ENCODE measurements at regions of chr22 and their contacts with region 1.

Region 1: GRCh38 chr22:35838855-35839576 is 121.3 kb downstream of the APOL5 start:
- DNase-seq: peak; percentile 64
- H3K4me3 ChIP-seq: peak overlapping the region; percentile 21
- H3K27ac ChIP-seq: peak overlapping the region; percentile 52
- H3K4me1 ChIP-seq: no peaks in the 10 kb centered on the region
- H3K27me3 ChIP-seq: no peaks in the 10 kb centered on the region
- CTCF ChIP-seq: no peak

Region 2: GRCh38 chr22:35914665-35915476 is 75.9 kb after region 1 on chr22:
- intact Hi-C with region 1: loop called (anchors 5 kb)
- DNase-seq: peak; percentile 83
- H3K4me3 ChIP-seq: peak overlapping the region; percentile 22
- H3K27ac ChIP-seq: peak overlapping the region; percentile 66
- H3K4me1 ChIP-seq: peaks cover 3% of the 10 kb centered on the region
- H3K27me3 ChIP-seq: no peaks in the 10 kb centered on the region
- CTCF ChIP-seq: no peak

Region 3: DNA sequence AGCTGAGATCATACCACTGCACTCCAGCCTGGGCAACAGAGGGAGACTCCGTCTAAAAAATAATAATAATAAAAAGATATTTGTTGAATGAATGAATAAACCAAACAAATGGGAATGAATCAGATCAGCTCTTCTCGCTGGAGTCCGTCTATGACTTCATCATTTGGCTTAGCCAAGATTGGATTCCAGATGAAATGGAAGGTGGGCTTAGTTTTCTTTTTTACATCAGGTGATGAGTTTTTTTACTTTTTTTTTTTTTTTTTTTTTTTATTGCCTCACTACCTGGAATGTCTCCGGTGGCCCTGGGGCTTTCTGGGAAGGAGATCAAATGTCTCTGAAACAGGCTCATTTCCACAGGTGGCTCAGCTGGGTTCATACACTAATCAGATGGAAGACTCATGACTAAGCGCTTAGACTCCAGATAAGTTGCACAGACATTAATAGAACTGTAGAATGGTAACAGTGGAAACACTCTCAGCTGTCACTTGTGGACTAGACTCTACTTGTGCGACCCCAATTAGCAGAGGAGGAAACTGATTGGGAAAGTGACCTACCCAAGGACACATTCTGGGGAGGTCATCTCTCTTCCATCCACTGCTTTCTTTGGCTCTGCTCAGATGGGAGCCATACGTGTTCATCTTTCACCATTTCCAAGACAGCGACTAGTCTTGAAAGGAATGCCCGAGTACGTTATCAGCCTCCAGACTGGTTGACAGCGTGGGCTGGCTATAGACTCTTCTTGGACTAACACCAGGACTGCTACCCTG is 210.1 kb after region 1 on chr22:
- intact Hi-C with region 1: no loop called
- DNase-seq: no peak
- H3K4me3 ChIP-seq: no peak overlapping the region
- H3K27ac ChIP-seq: no peak overlapping the region
- H3K4me1 ChIP-seq: no peaks in the 10 kb centered on the region
- H3K27me3 ChIP-seq: no peaks in the 10 kb centered on the region
- CTCF ChIP-seq: no peak